ENCODE measurements at regions of chr9 and their contacts with region 1.

Region 1: GRCh38 chr9:130042833-130043653 is at the start of gene FNBP1:
- DNase-seq: peak; percentile 80 to 89
- ATAC-seq: peak; percentile 75 to 87 (median 80)
- H3K4me3 ChIP-seq: peak within 1 kb of the TSS; percentile 92
- H3K4me3 Mint-ChIP-seq: peak within 1 kb of the TSS; percentile 99
- H3K27ac ChIP-seq: peak within 1 kb of the TSS; percentile 87
- H3K27ac Mint-ChIP-seq: peak within 1 kb of the TSS; percentile 97 to 99
- H3K4me1 ChIP-seq: peaks cover 44% of the 10 kb centered on the region
- H3K4me1 Mint-ChIP-seq: peaks cover 62 to 71% of the 10 kb centered on the region in 2 donors
- H3K27me3 ChIP-seq: no peaks in the 10 kb centered on the region
- H3K27me3 Mint-ChIP-seq: no peaks in the 10 kb centered on the region
- CTCF ChIP-seq: no peak
- total RNA-seq, gene FNBP1: 177 to 209 (median 203) TPM

Region 2: GRCh38 chr9:129823935-129824601 is 219.0 kb before region 1 on chr9 and contains the start of gene TOR1A:
- intact Hi-C with region 1: loop called (anchors 10 kb)
- DNase-seq: peak; percentile 89 to 95
- ATAC-seq: peak; percentile 90 to 96 (median 91)
- H3K4me3 ChIP-seq: peak within 1 kb of the TSS; percentile 51
- H3K4me3 Mint-ChIP-seq: peak within 1 kb of the TSS; percentile 89
- H3K27ac ChIP-seq: peak within 1 kb of the TSS; percentile 51
- H3K27ac Mint-ChIP-seq: peak within 1 kb of the TSS; percentile 83 to 87
- H3K4me1 ChIP-seq: peaks cover 13% of the 10 kb centered on the region
- H3K4me1 Mint-ChIP-seq: peaks cover 12 to 13% of the 10 kb centered on the region in 2 donors
- H3K27me3 ChIP-seq: no peaks in the 10 kb centered on the region
- H3K27me3 Mint-ChIP-seq: no peaks in the 10 kb centered on the region
- CTCF ChIP-seq: no peak
- total RNA-seq, gene TOR1A: 26.1 to 36.4 (median 34.8) TPM

Region 3: DNA sequence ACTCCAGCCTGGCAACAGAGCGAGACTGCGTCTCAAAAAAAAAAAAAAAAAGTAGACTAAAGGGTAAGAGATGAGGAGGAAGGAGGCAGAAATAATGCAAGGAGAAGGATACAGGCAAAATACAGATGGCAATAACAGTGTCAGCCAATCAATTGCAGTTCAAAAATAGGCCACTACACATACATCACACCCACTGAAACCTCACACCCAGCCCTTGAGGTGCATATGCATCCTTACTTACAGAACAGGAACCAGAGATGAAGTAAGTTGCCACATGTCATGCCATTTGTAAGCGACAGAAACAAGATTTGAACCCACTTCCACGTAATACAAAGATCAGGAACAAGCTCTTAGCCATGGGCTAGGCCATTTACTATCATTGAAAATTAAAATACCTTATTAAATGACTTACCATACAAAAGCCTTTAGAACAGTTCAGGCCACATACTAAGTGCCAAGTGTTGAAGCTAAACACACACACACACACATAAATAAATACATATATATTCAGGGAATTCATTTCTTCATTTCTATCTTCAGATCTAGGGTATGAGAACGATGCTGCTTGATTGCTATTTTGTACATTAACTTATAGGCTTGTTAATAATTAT is 98.4 kb before region 1 on chr9:
- intact Hi-C with region 1: loop called (anchors 5 kb)
- DNase-seq: peak; percentile 37 to 87
- ATAC-seq: peak; percentile 91 to 94 (median 93)
- H3K4me3 ChIP-seq: no peak overlapping the region
- H3K4me3 Mint-ChIP-seq: peak overlapping the region; percentile 71
- H3K27ac ChIP-seq: peak overlapping the region; percentile 92
- H3K27ac Mint-ChIP-seq: peak overlapping the region; percentile 81 to 93
- H3K4me1 ChIP-seq: peaks cover 30% of the 10 kb centered on the region
- H3K4me1 Mint-ChIP-seq: peaks cover 47 to 52% of the 10 kb centered on the region in 2 donors
- H3K27me3 ChIP-seq: no peaks in the 10 kb centered on the region
- H3K27me3 Mint-ChIP-seq: no peaks in the 10 kb centered on the region
- CTCF ChIP-seq: no peak

Region 4: DNA sequence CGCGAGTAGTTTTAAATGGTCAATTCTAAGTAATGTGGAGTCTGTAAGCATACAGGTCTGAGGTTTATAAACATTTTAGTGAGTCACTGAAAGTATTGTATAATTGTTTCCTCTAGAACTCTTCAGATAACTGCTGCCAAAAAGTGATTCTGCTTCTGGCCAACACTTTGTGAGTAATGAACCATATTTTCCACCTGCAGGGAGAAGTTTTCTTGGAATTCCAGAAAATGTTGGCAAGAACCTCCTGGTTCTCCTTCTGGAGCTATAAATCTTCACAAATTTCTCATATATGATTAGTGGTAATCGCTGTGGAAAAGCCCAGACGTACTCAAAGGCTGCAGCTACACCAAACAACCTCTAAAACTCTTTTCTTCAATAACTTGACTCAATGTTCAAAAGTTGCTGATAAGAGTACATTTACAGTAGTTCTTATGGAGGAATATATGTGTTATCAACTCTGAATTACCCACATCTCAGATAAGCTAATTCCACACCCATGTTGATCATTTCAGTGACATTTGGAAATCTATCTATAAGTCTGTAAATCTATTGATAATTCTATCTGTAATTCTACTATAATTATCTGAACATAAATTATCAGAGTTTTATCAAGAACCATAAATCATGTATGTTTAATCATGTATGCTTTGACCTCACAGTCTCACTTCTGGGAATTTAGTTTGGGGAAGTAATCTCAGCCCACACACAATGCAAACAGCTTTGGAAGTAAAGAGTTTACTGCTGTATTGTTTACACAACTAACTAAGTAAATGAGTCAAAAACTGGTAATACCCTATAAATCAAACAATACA is 74.1 kb before region 1 on chr9:
- intact Hi-C with region 1: no loop called
- DNase-seq: no peak
- ATAC-seq: no peak
- H3K4me3 ChIP-seq: no peak overlapping the region
- H3K4me3 Mint-ChIP-seq: no peak overlapping the region
- H3K27ac ChIP-seq: no peak overlapping the region
- H3K27ac Mint-ChIP-seq: peak overlapping the region; percentile 66 to 69
- H3K4me1 ChIP-seq: peaks cover 5% of the 10 kb centered on the region
- H3K4me1 Mint-ChIP-seq: peaks cover 28 to 29% of the 10 kb centered on the region in 2 donors
- H3K27me3 ChIP-seq: no peaks in the 10 kb centered on the region
- H3K27me3 Mint-ChIP-seq: no peaks in the 10 kb centered on the region
- CTCF ChIP-seq: no peak

Region 5: GRCh38 chr9:129995409-129996160 is 47.5 kb before region 1 on chr9:
- intact Hi-C with region 1: loop called (anchors 5 kb)
- DNase-seq: peak in 1 of 2 donors; percentile 55
- ATAC-seq: peak; percentile 43 to 60 (median 56)
- H3K4me3 ChIP-seq: no peak overlapping the region
- H3K4me3 Mint-ChIP-seq: peak overlapping the region; percentile 49
- H3K27ac ChIP-seq: peak overlapping the region; percentile 53
- H3K27ac Mint-ChIP-seq: peak overlapping the region; percentile 81 to 82
- H3K4me1 ChIP-seq: peaks cover 56% of the 10 kb centered on the region
- H3K4me1 Mint-ChIP-seq: peaks cover 49 to 55% of the 10 kb centered on the region in 2 donors
- H3K27me3 ChIP-seq: no peaks in the 10 kb centered on the region
- H3K27me3 Mint-ChIP-seq: no peaks in the 10 kb centered on the region
- CTCF ChIP-seq: no peak

Region 6: DNA sequence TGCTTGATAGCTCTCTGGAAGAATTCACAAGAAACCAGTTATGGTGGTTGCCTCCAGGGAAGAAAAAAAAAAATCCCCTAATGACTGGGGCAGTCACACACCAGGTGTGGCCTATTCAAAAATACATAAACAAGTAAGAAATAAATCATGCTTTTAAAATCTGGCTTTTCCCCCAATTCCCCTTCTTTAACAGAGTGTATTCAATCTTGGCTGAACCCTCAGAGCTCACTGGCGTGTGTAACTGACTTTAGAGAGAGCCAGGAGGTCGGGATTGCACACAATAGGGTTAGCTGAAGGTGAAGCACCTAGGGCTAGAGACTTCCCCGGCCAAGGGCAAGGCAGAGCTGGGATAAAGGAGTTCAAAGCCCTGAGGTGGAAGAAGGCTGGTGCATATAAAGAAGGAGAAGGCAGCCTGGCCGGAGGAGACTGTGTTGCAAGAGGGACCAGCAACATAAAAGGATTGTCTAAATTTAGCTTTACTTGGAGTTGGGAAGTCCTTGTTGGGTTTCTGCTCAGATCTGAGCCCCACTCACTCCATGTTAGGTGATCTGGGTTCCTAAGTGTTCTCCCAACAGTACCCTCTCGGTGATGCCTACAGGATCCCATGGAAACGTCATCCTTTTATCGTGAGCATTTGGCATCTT is 19.8 kb before region 1 on chr9:
- intact Hi-C with region 1: loop called (anchors 2 kb)
- DNase-seq: peak in 1 of 2 donors; percentile 59
- ATAC-seq: peak; percentile 47 to 73 (median 56)
- H3K4me3 ChIP-seq: no peak overlapping the region
- H3K4me3 Mint-ChIP-seq: peak overlapping the region; percentile 25
- H3K27ac ChIP-seq: peak overlapping the region; percentile 61
- H3K27ac Mint-ChIP-seq: peak overlapping the region; percentile 84 to 86
- H3K4me1 ChIP-seq: peaks cover 59% of the 10 kb centered on the region
- H3K4me1 Mint-ChIP-seq: peaks cover 60 to 77% of the 10 kb centered on the region in 2 donors
- H3K27me3 ChIP-seq: no peaks in the 10 kb centered on the region
- H3K27me3 Mint-ChIP-seq: no peaks in the 10 kb centered on the region
- CTCF ChIP-seq: no peak

Region 7: GRCh38 chr9:130073373-130073772 is 30.3 kb after region 1 on chr9:
- intact Hi-C with region 1: no loop called
- DNase-seq: no peak
- ATAC-seq: no peak
- H3K4me3 ChIP-seq: no peak overlapping the region
- H3K4me3 Mint-ChIP-seq: no peak overlapping the region
- H3K27ac ChIP-seq: no peak overlapping the region
- H3K27ac Mint-ChIP-seq: peak overlapping the region in 1 of 2 donors; percentile 51
- H3K4me1 ChIP-seq: peaks cover 5% of the 10 kb centered on the region
- H3K4me1 Mint-ChIP-seq: peaks cover 15 to 25% of the 10 kb centered on the region in 2 donors
- H3K27me3 ChIP-seq: no peaks in the 10 kb centered on the region
- H3K27me3 Mint-ChIP-seq: no peaks in the 10 kb centered on the region
- CTCF ChIP-seq: no peak

Region 8: DNA sequence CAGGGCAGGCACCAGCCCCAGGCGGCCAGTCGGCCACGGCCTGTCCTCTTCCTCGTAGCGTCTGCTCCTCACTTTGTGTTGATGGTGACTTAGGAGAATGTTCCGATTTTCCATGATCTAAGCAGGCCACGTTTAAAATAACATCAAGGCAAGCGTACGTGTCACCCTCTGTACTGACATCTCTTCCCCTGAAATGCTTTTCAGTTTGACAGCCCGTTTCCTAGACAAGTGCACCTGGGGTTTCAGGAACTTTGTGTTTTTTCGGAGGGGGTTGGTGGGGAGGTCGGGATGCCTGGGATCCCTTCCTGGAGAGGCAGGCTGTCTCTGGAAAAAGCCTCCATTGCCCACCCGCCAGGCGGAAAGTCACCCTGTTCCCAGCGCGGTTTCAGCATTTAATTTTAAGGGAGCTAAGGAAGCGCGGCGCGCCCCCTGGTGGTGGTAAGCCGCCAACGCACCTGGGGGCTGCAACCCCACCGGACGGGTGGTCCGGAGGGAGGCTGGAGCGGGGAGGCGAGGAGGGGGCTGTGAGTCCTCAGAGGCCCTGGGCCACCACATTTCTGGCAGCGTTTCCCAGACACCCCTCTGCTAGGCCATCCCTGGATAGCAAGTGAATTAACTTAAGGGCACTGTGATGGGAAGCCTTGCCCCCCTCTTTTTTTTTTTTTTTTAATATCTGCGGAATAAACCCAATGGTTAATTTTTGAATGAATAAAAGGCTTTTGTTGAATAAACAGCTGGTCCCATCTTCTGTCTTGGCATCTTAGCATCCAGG is 193.0 kb after region 1 on chr9:
- intact Hi-C with region 1: no loop called
- DNase-seq: peak; percentile 73 to 82
- ATAC-seq: peak; percentile 66 to 82 (median 73)
- H3K4me3 ChIP-seq: no peak overlapping the region
- H3K4me3 Mint-ChIP-seq: no peak overlapping the region
- H3K27ac ChIP-seq: no peak overlapping the region
- H3K27ac Mint-ChIP-seq: peak overlapping the region in 1 of 2 donors; percentile 43
- H3K4me1 ChIP-seq: peaks cover 18% of the 10 kb centered on the region
- H3K4me1 Mint-ChIP-seq: peaks cover 9 to 11% of the 10 kb centered on the region in 2 donors
- H3K27me3 ChIP-seq: no peaks in the 10 kb centered on the region
- H3K27me3 Mint-ChIP-seq: no peaks in the 10 kb centered on the region
- CTCF ChIP-seq: peak; percentile 97